OCI-LY7 (cell line): ENCODE measurements at regions of chr6 and their contacts with region 1.

Region 1: DNA sequence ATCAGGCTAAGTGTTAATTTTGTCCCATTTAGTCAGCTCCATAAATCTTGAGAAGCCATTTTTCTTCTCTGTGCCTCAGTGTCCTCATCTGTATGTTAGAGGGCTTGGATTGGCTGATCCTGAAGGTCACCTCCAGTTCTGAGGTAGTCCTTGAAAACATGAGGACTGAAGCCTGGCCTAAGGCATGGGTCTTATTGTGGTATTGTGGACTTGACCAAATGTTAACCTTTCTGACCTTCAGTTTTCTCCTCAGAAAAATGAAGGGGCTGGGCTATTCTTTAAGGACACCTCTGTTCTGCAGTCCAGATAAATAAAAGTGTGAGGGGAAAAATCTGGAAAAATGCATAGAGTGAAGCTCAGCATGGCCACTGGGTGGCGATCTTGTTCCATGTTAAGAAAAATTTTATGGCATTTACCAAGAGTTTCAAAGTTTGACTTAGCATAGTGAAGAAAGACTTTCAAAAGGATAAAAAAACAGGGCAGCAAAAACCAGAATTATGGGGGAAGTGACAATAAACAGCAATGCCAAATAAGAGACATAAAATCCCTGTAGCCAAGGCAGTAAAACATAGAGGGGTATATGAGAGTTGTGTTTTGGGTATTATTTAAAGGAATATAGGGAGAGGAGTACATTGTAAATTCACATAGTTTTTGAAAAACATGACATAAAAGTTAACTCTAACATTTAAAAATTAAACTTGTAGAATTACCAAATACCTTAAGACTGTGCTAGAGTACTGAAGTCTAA is 13.2 kb upstream of the TFB1M start:
- DNase-seq: peak; percentile 76
- H3K4me3 ChIP-seq: no peak overlapping the region
- H3K27ac ChIP-seq: no peak overlapping the region
- H3K4me1 ChIP-seq: peaks cover 3% of the 10 kb centered on the region
- CTCF ChIP-seq: peak; percentile 99

Region 2: DNA sequence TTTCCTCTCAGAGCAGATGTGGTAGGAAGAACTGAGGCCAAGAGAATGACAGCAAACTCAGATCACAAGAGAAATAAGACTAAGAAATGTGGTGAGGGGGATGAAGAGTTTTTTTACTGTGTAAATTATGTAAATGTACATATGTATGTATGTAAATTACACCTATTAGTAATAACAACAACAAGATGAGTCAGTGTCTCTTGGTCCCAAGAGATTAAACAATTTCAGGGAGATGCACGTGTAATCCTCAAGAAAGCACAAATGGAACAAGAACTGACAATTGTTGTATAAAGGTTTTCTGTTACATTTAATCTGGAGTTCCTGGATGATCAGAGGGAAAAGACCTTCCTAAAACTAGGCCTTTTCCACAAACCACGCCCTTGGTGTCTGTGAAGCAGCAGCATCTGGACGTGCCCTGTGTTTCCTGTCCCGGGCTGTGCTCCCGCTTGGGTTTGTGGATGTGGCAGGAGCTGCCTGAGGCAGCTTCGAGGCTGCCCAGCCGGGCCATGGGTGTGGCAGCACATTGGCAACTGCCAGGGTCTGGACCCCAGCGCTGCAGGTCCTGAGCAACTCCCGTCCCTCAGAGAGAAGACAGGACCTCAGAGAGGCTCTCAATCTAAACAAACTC is 62.7 kb before region 1 on chr6:
- CTCF ChIA-PET with region 1: no interaction called
- POLR2A ChIA-PET with region 1: no interaction called
- intact Hi-C with region 1: no loop called
- DNase-seq: no peak
- H3K4me3 ChIP-seq: no peak overlapping the region
- H3K27ac ChIP-seq: no peak overlapping the region
- H3K4me1 ChIP-seq: peaks cover 7% of the 10 kb centered on the region
- CTCF ChIP-seq: no peak

Region 3: DNA sequence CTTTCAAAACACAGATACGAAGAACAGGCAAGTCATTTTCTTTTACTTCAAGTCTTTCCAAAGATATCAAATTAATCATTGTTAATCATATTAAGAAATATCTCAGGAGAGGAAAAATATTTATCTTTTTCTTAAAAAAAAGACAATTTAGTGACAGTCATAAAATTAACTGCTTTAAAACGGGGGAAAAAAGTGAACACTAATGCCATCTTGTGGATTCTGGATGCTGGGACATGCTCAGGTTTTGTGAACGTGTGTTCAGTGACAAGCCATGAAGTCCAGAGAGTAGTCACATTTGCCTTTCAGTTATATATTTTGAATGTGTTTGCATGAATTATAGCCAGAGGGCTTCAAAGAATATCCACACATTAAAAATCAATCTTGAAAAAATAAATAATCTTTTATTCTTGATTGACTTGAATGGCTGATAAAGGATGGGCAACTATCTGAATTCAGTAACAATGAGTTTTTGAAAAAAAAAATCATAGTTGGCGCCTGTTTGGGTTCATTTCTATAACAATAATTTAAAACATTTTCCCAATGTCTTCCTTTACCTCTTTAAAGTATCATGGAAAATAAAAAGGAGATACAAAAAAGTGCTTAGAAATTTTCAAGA is 202.8 kb after region 1 on chr6:
- CTCF ChIA-PET with region 1: no interaction called
- POLR2A ChIA-PET with region 1: no interaction called
- intact Hi-C with region 1: loop called (anchors 1 kb)
- DNase-seq: peak; percentile 66
- H3K4me3 ChIP-seq: no peak overlapping the region
- H3K27ac ChIP-seq: no peak overlapping the region
- H3K4me1 ChIP-seq: peaks cover 10% of the 10 kb centered on the region
- CTCF ChIP-seq: peak; percentile 97

Region 4: GRCh38 chr6:156557251-156557910 is 1229.9 kb after region 1 on chr6:
- CTCF ChIA-PET with region 1: no interaction called
- POLR2A ChIA-PET with region 1: no interaction called
- intact Hi-C with region 1: loop called (anchors 10 kb)
- DNase-seq: no peak
- H3K4me3 ChIP-seq: no peak overlapping the region
- H3K27ac ChIP-seq: no peak overlapping the region
- H3K4me1 ChIP-seq: no peaks in the 10 kb centered on the region
- CTCF ChIP-seq: no peak